Common myeloid progenitor, CD34-positive (primary cell): ENCODE measurements at regions of chr14 and their contacts with region 1.

Region 1: GRCh38 chr14:90758028-90758889 is 58.0 kb downstream of the TTC7B start:
- DNase-seq: peak; percentile 92 to 96 (median 94)
- H3K4me3 ChIP-seq: peak overlapping the region; percentile 30 to 82 (median 61)
- H3K27ac ChIP-seq: peak overlapping the region; percentile 28 to 68
- H3K4me1 ChIP-seq: peaks cover 5 to 24% (median 24%) of the 10 kb centered on the region in 4 experiments
- H3K27me3 ChIP-seq: no peaks in the 10 kb centered on the region

Region 2: GRCh38 chr14:90301668-90302090 is 456.6 kb before region 1 on chr14:
- CTCF ChIA-PET with region 1: interaction called, 10 read pairs
- POLR2A ChIA-PET with region 1: no interaction called
- DNase-seq: peak; percentile 33 to 69 (median 64)
- H3K4me3 ChIP-seq: no peak overlapping the region
- H3K27ac ChIP-seq: no peak overlapping the region
- H3K4me1 ChIP-seq: peaks cover 7 to 22% (median 12%) of the 10 kb centered on the region in 4 experiments
- H3K27me3 ChIP-seq: no peaks in the 10 kb centered on the region

Region 3: DNA sequence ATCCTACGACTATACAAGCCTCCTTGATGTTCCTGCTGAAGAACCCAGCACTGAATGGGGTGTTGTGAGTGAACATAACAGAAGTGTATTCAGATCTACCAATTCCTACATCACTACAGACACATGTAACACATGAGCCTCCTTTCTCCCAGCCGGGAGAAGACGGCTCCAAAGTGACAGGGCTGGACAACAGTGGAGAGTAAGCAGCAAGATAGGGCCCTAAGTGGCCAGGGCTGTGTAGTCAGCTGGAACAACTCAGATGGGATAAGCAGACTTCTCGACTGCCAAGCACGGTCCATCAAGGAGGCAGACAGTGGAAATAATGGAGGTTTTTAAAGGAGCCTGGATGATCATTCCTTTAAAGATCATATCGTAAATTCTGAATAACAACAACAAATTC is 15.5 kb before region 1 on chr14:
- CTCF ChIA-PET with region 1: interaction called, 22 read pairs
- POLR2A ChIA-PET with region 1: no interaction called
- DNase-seq: no peak
- H3K4me3 ChIP-seq: no peak overlapping the region
- H3K27ac ChIP-seq: no peak overlapping the region
- H3K4me1 ChIP-seq: peaks cover 0 to 4% (median 0%) of the 10 kb centered on the region in 4 experiments
- H3K27me3 ChIP-seq: no peaks in the 10 kb centered on the region

Region 4: DNA sequence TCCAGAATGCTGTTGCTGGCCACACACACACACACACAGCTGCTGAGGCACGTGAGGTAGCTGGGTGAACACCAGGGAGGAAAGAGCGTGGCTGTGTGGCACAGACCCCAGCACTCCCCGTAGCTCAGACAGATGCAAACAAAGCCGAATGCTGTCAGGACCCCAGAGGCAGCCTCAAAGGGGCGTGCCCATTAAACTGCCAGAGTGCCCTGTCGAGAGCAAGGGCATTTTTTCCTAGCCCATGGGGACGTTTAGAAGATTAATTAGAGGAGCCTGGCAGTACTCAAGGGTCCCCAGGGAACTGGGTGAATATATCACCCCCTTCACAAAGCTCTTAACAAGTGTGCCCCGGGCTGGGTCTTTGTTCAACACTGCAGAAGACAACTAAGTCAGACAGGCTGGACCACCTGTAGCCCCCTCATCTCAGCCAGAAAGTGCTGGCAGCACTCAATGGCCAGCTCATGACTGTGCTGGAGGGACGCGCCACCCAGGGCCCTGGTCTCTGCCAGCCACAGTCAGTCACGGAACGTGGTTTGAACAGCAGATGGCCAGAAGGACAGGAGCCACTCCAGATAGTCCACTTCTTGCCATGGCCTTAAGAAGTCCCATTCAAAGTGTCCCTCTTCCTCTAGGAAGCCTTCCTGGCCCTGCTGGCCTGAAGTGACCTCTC is 20.4 kb after region 1 on chr14:
- CTCF ChIA-PET with region 1: no interaction called
- POLR2A ChIA-PET with region 1: no interaction called
- DNase-seq: no peak
- H3K4me3 ChIP-seq: no peak overlapping the region
- H3K27ac ChIP-seq: no peak overlapping the region
- H3K4me1 ChIP-seq: no peaks in the 10 kb centered on the region
- H3K27me3 ChIP-seq: no peaks in the 10 kb centered on the region

Region 5: GRCh38 chr14:90795746-90796145 is 37.5 kb after region 1 on chr14:
- CTCF ChIA-PET with region 1: interaction called, 32 read pairs
- POLR2A ChIA-PET with region 1: interaction called, 3 read pairs
- DNase-seq: no peak
- H3K4me3 ChIP-seq: no peak overlapping the region
- H3K27ac ChIP-seq: no peak overlapping the region
- H3K4me1 ChIP-seq: peaks cover 0 to 37% (median 28%) of the 10 kb centered on the region in 4 experiments
- H3K27me3 ChIP-seq: no peaks in the 10 kb centered on the region

Region 6: DNA sequence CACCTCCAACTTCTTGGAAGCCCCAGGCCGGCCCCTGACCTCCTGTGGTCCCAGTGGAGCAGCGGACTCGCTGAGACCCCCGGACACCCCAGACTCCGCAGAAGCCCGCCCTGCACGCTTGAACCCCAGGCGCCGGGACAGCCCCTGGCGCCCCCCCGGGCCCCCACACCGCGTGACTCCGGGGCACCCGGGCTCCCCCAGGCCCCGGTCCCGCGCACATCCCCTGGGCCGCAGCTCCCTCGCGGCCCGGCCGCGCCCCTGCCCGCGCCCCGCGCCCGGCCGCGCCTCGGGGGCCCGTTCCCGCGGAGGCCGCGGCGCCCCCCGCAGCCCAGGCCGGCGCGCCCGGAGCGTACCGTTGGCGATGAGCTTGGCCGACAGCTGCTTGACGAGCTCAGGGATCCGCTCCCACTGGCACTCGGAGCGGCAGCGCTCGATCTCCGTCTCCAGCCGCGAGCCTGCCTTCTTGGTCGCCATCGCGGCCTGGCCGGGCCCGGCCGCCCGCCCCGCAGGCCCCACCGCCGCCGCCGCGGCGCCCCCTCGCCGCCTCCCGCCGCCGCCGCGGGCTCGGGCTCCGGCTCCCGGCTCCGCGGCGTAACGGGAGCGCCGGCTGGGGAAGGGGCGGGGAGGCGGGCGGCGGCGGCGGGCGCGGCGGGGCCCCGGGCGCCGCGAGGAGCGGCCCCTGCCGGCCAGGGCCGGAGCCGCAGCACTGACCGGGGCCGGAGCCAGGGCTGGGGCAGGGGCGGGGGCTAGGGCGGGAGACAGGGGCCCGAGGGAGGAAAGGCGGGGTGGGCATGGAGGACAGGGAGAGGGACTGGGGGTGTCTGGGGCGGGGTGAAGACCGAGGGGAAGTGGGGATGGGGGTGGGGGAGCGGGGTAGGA is 57.8 kb after region 1 on chr14 and contains the start of gene TTC7B:
- CTCF ChIA-PET with region 1: interaction called, 11 read pairs
- POLR2A ChIA-PET with region 1: no interaction called
- DNase-seq: peak in 1 of 3 donors; percentile 47
- H3K4me3 ChIP-seq: peak within 1 kb of the TSS; percentile 53 to 87 (median 75)
- H3K27ac ChIP-seq: peak within 1 kb of the TSS in 1 of 2 experiments; percentile 67
- H3K4me1 ChIP-seq: peaks cover 0 to 45% (median 33%) of the 10 kb centered on the region in 4 experiments
- H3K27me3 ChIP-seq: no peaks in the 10 kb centered on the region

Region 7: GRCh38 chr14:90839024-90839888 is 81.0 kb after region 1 on chr14:
- CTCF ChIA-PET with region 1: no interaction called
- POLR2A ChIA-PET with region 1: no interaction called
- DNase-seq: no peak
- H3K4me3 ChIP-seq: no peak overlapping the region
- H3K27ac ChIP-seq: no peak overlapping the region
- H3K4me1 ChIP-seq: peaks cover 0 to 34% (median 21%) of the 10 kb centered on the region in 4 experiments
- H3K27me3 ChIP-seq: no peaks in the 10 kb centered on the region

Region 8: GRCh38 chr14:90850487-90850886 is 92.2 kb after region 1 on chr14:
- CTCF ChIA-PET with region 1: no interaction called
- POLR2A ChIA-PET with region 1: no interaction called
- DNase-seq: no peak
- H3K4me3 ChIP-seq: no peak overlapping the region
- H3K27ac ChIP-seq: no peak overlapping the region
- H3K4me1 ChIP-seq: peaks cover 0 to 4% (median 0%) of the 10 kb centered on the region in 4 experiments
- H3K27me3 ChIP-seq: no peaks in the 10 kb centered on the region